ENCODE measurements at regions of chr5 and their contacts with region 1.

Region 1: GRCh38 chr5:112902561-112902960 is 19.5 kb downstream of the REEP5 start:
- DNase-seq: no peak
- ATAC-seq: no peak
- H3K4me3 ChIP-seq: no peak overlapping the region
- H3K27ac ChIP-seq: no peak overlapping the region
- H3K4me1 ChIP-seq: no peaks in the 10 kb centered on the region
- H3K27me3 ChIP-seq: no peaks in the 10 kb centered on the region
- CTCF ChIP-seq: no peak
- EP300 ChIP-seq: no peak
- POLR2A ChIP-seq: no peak
- RAD21 ChIP-seq: no peak

Region 2: GRCh38 chr5:112795944-112796678 is 106.5 kb before region 1 on chr5:
- CTCF ChIA-PET with region 1: no interaction called
- POLR2A ChIA-PET with region 1: no interaction called
- in situ Hi-C with region 1: no loop called
- intact Hi-C with region 1: no loop called
- DNase-seq: peak in 2 of 4 experiments; percentile 16 to 39
- ATAC-seq: peak; percentile 53
- H3K4me3 ChIP-seq: no peak overlapping the region
- H3K27ac ChIP-seq: peak overlapping the region; percentile 50; the same call in 2 of the 3 replicates
- H3K4me1 ChIP-seq: peaks cover 0 to 13% of the 10 kb centered on the region in 2 experiments; a peak in 4 of 5 replicates
- H3K27me3 ChIP-seq: no peaks in the 10 kb centered on the region
- CTCF ChIP-seq: no peak
- EP300 ChIP-seq: no peak
- POLR2A ChIP-seq: no peak
- RAD21 ChIP-seq: no peak

Region 3: GRCh38 chr5:112914584-112914983 is 12.0 kb after region 1 on chr5:
- CTCF ChIA-PET with region 1: no interaction called
- POLR2A ChIA-PET with region 1: interaction called, 17 read pairs
- in situ Hi-C with region 1: no loop called
- intact Hi-C with region 1: no loop called
- DNase-seq: peak; percentile 33 to 65 (median 40)
- ATAC-seq: peak; percentile 74
- H3K4me3 ChIP-seq: no peak overlapping the region
- H3K27ac ChIP-seq: no peak overlapping the region
- H3K4me1 ChIP-seq: peaks cover 0 to 13% of the 10 kb centered on the region in 2 experiments; a peak in 2 of 5 replicates
- H3K27me3 ChIP-seq: no peaks in the 10 kb centered on the region
- CTCF ChIP-seq: no peak
- EP300 ChIP-seq: no peak
- POLR2A ChIP-seq: no peak
- RAD21 ChIP-seq: no peak

Measured in K562 (cell line).